ENCODE measurements at regions of chr4 and their contacts with region 1.

Region 1: GRCh38 chr4:1351854-1352633 is 5.0 kb downstream of the UVSSA start:
- DNase-seq: no peak
- H3K4me3 ChIP-seq: no peak overlapping the region
- H3K27ac ChIP-seq: peak overlapping the region in 3 of 4 donors; percentile 31 to 52 (median 36)
- H3K4me1 ChIP-seq: peaks cover 10 to 45% (median 19%) of the 10 kb centered on the region in 3 donors
- H3K27me3 ChIP-seq: no peaks in the 10 kb centered on the region
- CTCF ChIP-seq: peak; percentile 89 to 97 (median 92)
- POLR2A ChIP-seq: no peak

Region 2: GRCh38 chr4:1130316-1131186 is 221.5 kb before region 1 on chr4:
- intact Hi-C with region 1: loop called (anchors 5 kb)
- DNase-seq: no peak
- H3K4me3 ChIP-seq: no peak overlapping the region
- H3K27ac ChIP-seq: no peak overlapping the region
- H3K4me1 ChIP-seq: peaks cover 0 to 9% (median 0%) of the 10 kb centered on the region in 3 donors
- H3K27me3 ChIP-seq: peaks cover 0 to 9% (median 0%) of the 10 kb centered on the region in 4 donors
- CTCF ChIP-seq: peak; percentile 96 to 99 (median 98)
- POLR2A ChIP-seq: no peak

Region 3: DNA sequence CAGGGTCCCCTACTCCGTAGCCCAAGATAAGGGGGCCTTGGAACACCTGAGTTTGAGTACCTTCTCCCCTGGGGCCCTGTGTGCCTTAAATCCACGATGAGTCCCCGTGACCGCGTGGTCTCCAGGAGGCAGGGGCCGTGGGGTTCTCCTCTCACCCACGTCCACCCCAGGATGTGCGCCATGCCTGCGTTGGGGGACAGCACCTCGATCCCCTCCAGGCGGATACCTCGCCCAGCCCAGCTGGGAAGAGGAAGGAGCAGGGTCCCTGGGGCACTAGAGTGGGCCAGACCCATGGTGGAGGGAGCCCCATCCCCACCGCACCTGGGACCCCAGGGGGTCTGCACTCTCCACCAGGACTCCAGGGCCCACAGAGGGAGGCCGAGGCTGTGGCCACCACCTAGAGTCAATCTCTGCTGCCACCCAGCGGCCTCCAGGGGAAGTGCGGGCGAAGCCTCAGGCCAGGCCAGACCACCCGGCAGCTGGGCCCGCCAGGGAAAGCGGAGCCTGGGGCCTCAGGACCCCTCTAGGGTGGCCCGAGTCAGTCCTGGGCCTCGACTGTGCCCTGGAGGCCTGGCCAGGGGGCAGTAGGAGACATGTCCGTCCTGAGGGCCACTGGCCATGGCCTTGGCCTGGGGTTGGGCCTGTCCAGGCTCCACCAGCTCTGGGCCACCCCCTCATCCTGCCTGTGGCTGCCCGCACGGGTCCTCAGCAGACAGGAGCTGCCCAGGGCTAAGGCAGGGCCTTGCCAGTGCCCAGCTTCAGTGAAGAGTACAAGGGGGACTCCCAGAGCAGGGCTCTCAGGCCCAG is 277.1 kb after region 1 on chr4:
- intact Hi-C with region 1: loop called (anchors 10 kb)
- DNase-seq: no peak
- H3K4me3 ChIP-seq: no peak overlapping the region
- H3K27ac ChIP-seq: no peak overlapping the region
- H3K4me1 ChIP-seq: peaks cover 0 to 6% (median 0%) of the 10 kb centered on the region in 3 donors
- H3K27me3 ChIP-seq: peaks cover 0 to 3% (median 0%) of the 10 kb centered on the region in 4 donors
- CTCF ChIP-seq: peak; percentile 87 to 98 (median 89)
- POLR2A ChIP-seq: no peak

Measured in esophagus squamous epithelium (tissue), 5 donors.